Prostate gland (tissue), 2 donors: ENCODE measurements at regions of chr2 and their contacts with region 1.

Region 1: GRCh38 chr2:108583903-108584520 is 49.7 kb downstream of the LIMS1 start:
- DNase-seq: peak; percentile 70
- H3K4me3 ChIP-seq: no peak overlapping the region
- H3K27ac ChIP-seq: no peak overlapping the region
- H3K4me1 ChIP-seq: peaks cover 3% of the 10 kb centered on the region
- H3K27me3 ChIP-seq: no peaks in the 10 kb centered on the region
- CTCF ChIP-seq: peak; percentile 60 to 84 (median 80)
- POLR2A ChIP-seq: no peak

Region 2: GRCh38 chr2:108215794-108216211 is 368.2 kb before region 1 on chr2:
- intact Hi-C with region 1: loop called (anchors 10 kb)
- DNase-seq: peak; percentile 12
- H3K4me3 ChIP-seq: no peak overlapping the region
- H3K27ac ChIP-seq: no peak overlapping the region
- H3K4me1 ChIP-seq: no peaks in the 10 kb centered on the region
- H3K27me3 ChIP-seq: no peaks in the 10 kb centered on the region
- CTCF ChIP-seq: peak in 3 of 4 experiments; percentile 22 to 50 (median 41)
- POLR2A ChIP-seq: no peak

Region 3: DNA sequence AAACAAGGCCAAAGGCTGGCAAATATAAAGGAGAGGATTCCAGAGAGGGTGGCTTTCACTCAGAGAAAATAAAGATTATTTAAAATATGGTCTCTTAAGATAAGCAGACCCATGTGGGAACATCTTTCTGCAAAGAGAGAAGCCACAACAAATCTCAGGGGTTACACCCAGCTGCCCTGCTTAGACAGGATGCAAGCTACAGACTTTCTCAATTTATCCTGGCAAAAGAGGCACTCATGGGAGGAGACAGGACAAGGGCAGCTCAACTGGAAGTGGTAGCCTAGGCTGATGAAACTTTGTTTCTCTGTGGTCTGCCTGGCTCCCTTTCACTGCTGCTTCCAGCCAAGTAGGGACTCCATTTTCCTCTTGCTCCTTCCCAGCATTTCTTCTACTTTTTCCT is 232.1 kb before region 1 on chr2:
- intact Hi-C with region 1: loop called (anchors 10 kb)
- DNase-seq: no peak
- H3K4me3 ChIP-seq: no peak overlapping the region
- H3K27ac ChIP-seq: no peak overlapping the region
- H3K4me1 ChIP-seq: no peaks in the 10 kb centered on the region
- H3K27me3 ChIP-seq: no peaks in the 10 kb centered on the region
- CTCF ChIP-seq: no peak
- POLR2A ChIP-seq: no peak

Region 4: GRCh38 chr2:108533832-108534583 is 50.0 kb before region 1 on chr2 and contains the start of gene LIMS1:
- intact Hi-C with region 1: loop called (anchors 5 kb)
- DNase-seq: peak; percentile 92
- H3K4me3 ChIP-seq: peak within 1 kb of the TSS; percentile 71 to 84
- H3K27ac ChIP-seq: peak within 1 kb of the TSS; percentile 98 to 100
- H3K4me1 ChIP-seq: no peaks in the 10 kb centered on the region
- H3K27me3 ChIP-seq: no peaks in the 10 kb centered on the region
- CTCF ChIP-seq: peak in 3 of 4 experiments; percentile 9 to 34 (median 12)
- POLR2A ChIP-seq: peak; percentile 88
- total RNA-seq, gene LIMS1: 82.9 to 90.4 TPM